Heart left ventricle (tissue), 16 donors: ENCODE measurements at regions of chr18 and their contacts with region 1.

Region 1: GRCh38 chr18:12391618-12392165 is 14.7 kb upstream of the AFG3L2 start:
- DNase-seq: peak in 3 of 5 donors; percentile 37 to 54 (median 53)
- ATAC-seq: peak; percentile 85 to 95 (median 92)
- H3K4me3 ChIP-seq: no peak overlapping the region
- H3K27ac ChIP-seq: no peak overlapping the region
- H3K4me1 ChIP-seq: no peaks in the 10 kb centered on the region
- H3K27me3 ChIP-seq: no peaks in the 10 kb centered on the region
- CTCF ChIP-seq: peak; percentile 83 to 96 (median 90)
- POLR2A ChIP-seq: no peak

Region 2: DNA sequence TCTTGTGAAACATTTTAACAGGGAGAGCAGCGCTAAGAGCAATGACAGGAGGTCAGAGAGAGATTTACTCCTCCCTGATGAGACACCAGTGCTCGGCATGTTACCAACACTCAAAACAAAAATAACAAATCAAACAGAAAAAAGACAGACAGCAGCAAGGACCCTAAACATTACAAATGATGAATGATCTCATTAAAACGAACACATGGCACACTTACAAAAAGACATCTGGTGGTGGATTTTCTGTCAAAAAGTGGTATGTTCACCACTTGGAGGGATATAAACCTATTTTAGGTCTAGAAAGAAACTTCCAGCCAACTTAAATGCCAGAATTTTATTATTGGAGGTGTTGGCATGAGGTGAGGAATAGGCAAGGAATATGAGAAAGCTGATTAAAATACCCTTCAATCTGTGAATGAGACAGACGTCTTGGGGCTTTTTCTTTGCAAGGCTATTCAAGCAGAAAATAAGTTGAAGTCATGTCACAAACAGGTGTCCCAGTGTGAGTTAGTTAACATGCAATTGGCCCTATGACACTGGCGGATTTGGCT is 128.8 kb after region 1 on chr18:
- intact Hi-C with region 1: loop called in 1 of 10 experiments (anchors 10 kb)
- DNase-seq: no peak
- ATAC-seq: peak in 1 of 4 donors; percentile 34
- H3K4me3 ChIP-seq: no peak overlapping the region
- H3K27ac ChIP-seq: no peak overlapping the region
- H3K4me1 ChIP-seq: peaks cover 0 to 30% (median 16%) of the 10 kb centered on the region in 12 donors
- H3K27me3 ChIP-seq: no peaks in the 10 kb centered on the region
- CTCF ChIP-seq: no peak
- POLR2A ChIP-seq: no peak

Region 3: GRCh38 chr18:12531749-12532148 is 140.1 kb after region 1 on chr18:
- intact Hi-C with region 1: loop called in 1 of 10 experiments (anchors 10 kb)
- DNase-seq: no peak
- ATAC-seq: no peak
- H3K4me3 ChIP-seq: no peak overlapping the region
- H3K27ac ChIP-seq: no peak overlapping the region
- H3K4me1 ChIP-seq: no peaks in the 10 kb centered on the region
- H3K27me3 ChIP-seq: no peaks in the 10 kb centered on the region
- CTCF ChIP-seq: no peak
- POLR2A ChIP-seq: no peak

Region 4: GRCh38 chr18:12621737-12622306 is 230.1 kb after region 1 on chr18:
- intact Hi-C with region 1: no loop called
- DNase-seq: no peak
- ATAC-seq: peak in 1 of 4 donors; percentile 44
- H3K4me3 ChIP-seq: no peak overlapping the region
- H3K27ac ChIP-seq: no peak overlapping the region
- H3K4me1 ChIP-seq: no peaks in the 10 kb centered on the region
- H3K27me3 ChIP-seq: no peaks in the 10 kb centered on the region
- CTCF ChIP-seq: no peak
- POLR2A ChIP-seq: no peak

Region 5: GRCh38 chr18:13026583-13027270 is 635.0 kb after region 1 on chr18:
- intact Hi-C with region 1: no loop called
- DNase-seq: no peak
- ATAC-seq: peak in 2 of 4 donors; percentile 23 to 24
- H3K4me3 ChIP-seq: no peak overlapping the region
- H3K27ac ChIP-seq: peak overlapping the region in 3 of 12 donors; percentile 50 to 65 (median 57)
- H3K4me1 ChIP-seq: peaks cover 0 to 27% (median 3%) of the 10 kb centered on the region in 12 donors
- H3K27me3 ChIP-seq: no peaks in the 10 kb centered on the region
- CTCF ChIP-seq: no peak
- POLR2A ChIP-seq: no peak